Lower leg skin (tissue), 4 donors: ENCODE measurements at regions of chr19 and their contacts with region 1.

Region 1: GRCh38 chr19:12716861-12717260 is 6.9 kb downstream of the TNPO2 start:
- DNase-seq: no peak
- H3K4me3 ChIP-seq: no peak overlapping the region
- CTCF ChIP-seq: no peak
- POLR2A ChIP-seq: no peak

Region 2: DNA sequence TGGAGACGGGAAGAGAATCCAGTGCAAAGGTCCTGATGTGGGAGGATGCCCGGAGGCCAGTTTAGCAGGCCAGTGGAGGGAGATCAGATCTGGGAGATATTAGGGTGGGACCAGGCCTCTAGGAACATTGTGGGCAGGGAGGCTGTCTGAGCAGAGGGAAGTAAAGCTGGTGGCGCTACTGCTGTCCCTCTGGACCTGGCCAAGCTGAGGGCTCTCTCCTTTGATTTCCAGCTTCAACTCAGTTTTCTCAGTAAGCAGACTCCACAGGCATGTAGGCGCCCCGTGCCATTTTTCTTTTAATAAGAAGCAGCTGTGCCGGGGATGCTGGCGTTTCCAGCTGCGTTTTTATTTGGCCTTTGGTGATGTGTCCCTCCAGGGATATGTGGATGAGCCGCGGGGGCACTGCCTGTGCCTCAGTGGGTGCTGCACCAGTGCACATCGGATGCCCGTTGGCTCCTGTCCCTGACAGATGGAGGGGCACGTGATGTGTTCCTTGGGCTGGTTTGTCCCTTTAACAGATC is 1992.2 kb before region 1 on chr19:
- intact Hi-C with region 1: no loop called
- DNase-seq: no peak
- H3K4me3 ChIP-seq: no peak overlapping the region
- CTCF ChIP-seq: no peak
- POLR2A ChIP-seq: no peak

Region 3: GRCh38 chr19:12757544-12758274 is 40.8 kb after region 1 on chr19:
- intact Hi-C with region 1: loop called (anchors 2 kb)
- DNase-seq: peak in 1 of 2 donors; percentile 92
- H3K4me3 ChIP-seq: no peak overlapping the region
- CTCF ChIP-seq: peak in 1 of 3 donors; percentile 53
- POLR2A ChIP-seq: no peak

Region 4: GRCh38 chr19:13132471-13133180 is 415.8 kb after region 1 on chr19:
- intact Hi-C with region 1: no loop called
- DNase-seq: no peak
- H3K4me3 ChIP-seq: no peak overlapping the region
- CTCF ChIP-seq: no peak
- POLR2A ChIP-seq: no peak